MCF 10A (cell line): ENCODE measurements at regions of chr2 and their contacts with region 1.

Region 1: GRCh38 chr2:176454893-176455811 is 185.9 kb downstream of the MTX2 start:
- DNase-seq: peak; percentile 68
- H3K4me3 Mint-ChIP-seq: no peak overlapping the region
- H3K27ac Mint-ChIP-seq: no peak overlapping the region
- H3K4me1 Mint-ChIP-seq: peaks cover 6% of the 10 kb centered on the region
- H3K27me3 Mint-ChIP-seq: no peaks in the 10 kb centered on the region
- CTCF ChIP-seq: peak; percentile 81

Region 2: GRCh38 chr2:176126929-176127773 is 328.0 kb before region 1 on chr2:
- CTCF ChIA-PET with region 1: interaction called, 15 read pairs
- POLR2A ChIA-PET with region 1: no interaction called
- intact Hi-C with region 1: no loop called
- DNase-seq: peak; percentile 63
- H3K4me3 Mint-ChIP-seq: no peak overlapping the region
- H3K27ac Mint-ChIP-seq: no peak overlapping the region
- H3K4me1 Mint-ChIP-seq: no peaks in the 10 kb centered on the region
- H3K27me3 Mint-ChIP-seq: peaks cover 11% of the 10 kb centered on the region
- CTCF ChIP-seq: peak; percentile 76

Region 3: DNA sequence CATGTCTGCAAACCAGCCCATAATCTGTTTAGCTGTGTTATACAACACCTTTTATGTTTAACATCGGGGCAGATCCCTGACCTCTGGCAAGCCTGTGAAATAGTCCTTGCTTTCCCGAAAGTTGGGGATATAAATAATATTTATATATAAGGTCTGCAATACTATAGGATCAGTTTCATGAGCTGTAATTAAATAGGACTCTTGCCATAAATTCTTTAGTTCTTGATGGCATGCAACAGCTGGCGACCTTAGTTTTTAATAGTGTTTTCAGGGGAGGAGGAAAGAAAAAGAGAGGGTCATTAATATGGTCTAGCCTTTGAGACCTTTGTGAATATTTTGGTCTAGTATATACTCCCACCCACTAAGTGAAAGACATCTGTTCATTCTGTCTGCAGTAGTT is 19.4 kb before region 1 on chr2:
- CTCF ChIA-PET with region 1: interaction called, 18 read pairs
- POLR2A ChIA-PET with region 1: no interaction called
- intact Hi-C with region 1: no loop called
- DNase-seq: no peak
- H3K4me3 Mint-ChIP-seq: no peak overlapping the region
- H3K27ac Mint-ChIP-seq: no peak overlapping the region
- H3K4me1 Mint-ChIP-seq: no peaks in the 10 kb centered on the region
- H3K27me3 Mint-ChIP-seq: no peaks in the 10 kb centered on the region
- CTCF ChIP-seq: no peak

Region 4: DNA sequence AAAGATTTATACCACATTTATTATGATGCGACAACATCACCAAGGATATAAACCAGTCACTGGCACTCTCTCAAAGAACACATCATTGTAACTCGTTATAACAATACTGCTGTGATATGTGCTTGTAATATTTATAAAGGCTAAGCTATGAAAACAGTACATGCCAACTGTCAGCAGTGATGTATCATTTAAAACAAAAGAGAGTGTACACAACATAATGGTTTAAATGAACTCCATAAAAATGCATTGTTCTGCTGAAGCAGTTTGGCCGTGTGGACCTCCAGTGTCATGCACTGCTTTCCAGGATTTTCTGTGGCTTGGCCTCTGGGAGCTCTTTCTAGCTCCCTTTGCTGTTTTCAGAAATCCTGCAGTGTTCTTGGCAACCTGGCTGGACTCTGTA is 29.7 kb after region 1 on chr2:
- CTCF ChIA-PET with region 1: interaction called, 12 read pairs
- POLR2A ChIA-PET with region 1: no interaction called
- intact Hi-C with region 1: no loop called
- DNase-seq: no peak
- H3K4me3 Mint-ChIP-seq: no peak overlapping the region
- H3K27ac Mint-ChIP-seq: no peak overlapping the region
- H3K4me1 Mint-ChIP-seq: no peaks in the 10 kb centered on the region
- H3K27me3 Mint-ChIP-seq: no peaks in the 10 kb centered on the region
- CTCF ChIP-seq: no peak

Region 5: DNA sequence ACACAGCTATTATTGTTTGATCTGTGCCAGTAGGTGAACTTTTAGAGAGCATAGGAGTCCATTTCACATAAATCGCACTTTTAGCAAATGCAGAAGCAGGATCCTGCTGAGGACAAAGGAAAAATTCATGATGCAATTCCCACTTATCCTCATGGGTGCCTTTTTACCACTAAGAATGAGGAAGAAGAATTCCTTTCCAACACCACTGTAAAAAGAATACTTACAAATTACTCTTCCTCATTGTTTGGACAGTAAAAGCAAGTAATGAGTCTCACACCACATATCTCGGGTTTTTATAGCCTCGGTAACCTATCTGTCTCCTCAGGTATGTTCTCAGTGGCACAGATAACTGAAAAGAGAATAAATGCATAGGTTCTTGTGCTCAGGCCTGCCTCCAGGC is 52.6 kb after region 1 on chr2:
- CTCF ChIA-PET with region 1: no interaction called
- POLR2A ChIA-PET with region 1: no interaction called
- intact Hi-C with region 1: no loop called
- DNase-seq: no peak
- H3K4me3 Mint-ChIP-seq: no peak overlapping the region
- H3K27ac Mint-ChIP-seq: no peak overlapping the region
- H3K4me1 Mint-ChIP-seq: peaks cover 4% of the 10 kb centered on the region
- H3K27me3 Mint-ChIP-seq: no peaks in the 10 kb centered on the region
- CTCF ChIP-seq: no peak

Region 6: GRCh38 chr2:176569574-176569973 is 114.4 kb after region 1 on chr2:
- CTCF ChIA-PET with region 1: no interaction called
- POLR2A ChIA-PET with region 1: no interaction called
- intact Hi-C with region 1: no loop called
- DNase-seq: no peak
- H3K4me3 Mint-ChIP-seq: no peak overlapping the region
- H3K27ac Mint-ChIP-seq: no peak overlapping the region
- H3K4me1 Mint-ChIP-seq: no peaks in the 10 kb centered on the region
- H3K27me3 Mint-ChIP-seq: no peaks in the 10 kb centered on the region
- CTCF ChIP-seq: no peak

Region 7: DNA sequence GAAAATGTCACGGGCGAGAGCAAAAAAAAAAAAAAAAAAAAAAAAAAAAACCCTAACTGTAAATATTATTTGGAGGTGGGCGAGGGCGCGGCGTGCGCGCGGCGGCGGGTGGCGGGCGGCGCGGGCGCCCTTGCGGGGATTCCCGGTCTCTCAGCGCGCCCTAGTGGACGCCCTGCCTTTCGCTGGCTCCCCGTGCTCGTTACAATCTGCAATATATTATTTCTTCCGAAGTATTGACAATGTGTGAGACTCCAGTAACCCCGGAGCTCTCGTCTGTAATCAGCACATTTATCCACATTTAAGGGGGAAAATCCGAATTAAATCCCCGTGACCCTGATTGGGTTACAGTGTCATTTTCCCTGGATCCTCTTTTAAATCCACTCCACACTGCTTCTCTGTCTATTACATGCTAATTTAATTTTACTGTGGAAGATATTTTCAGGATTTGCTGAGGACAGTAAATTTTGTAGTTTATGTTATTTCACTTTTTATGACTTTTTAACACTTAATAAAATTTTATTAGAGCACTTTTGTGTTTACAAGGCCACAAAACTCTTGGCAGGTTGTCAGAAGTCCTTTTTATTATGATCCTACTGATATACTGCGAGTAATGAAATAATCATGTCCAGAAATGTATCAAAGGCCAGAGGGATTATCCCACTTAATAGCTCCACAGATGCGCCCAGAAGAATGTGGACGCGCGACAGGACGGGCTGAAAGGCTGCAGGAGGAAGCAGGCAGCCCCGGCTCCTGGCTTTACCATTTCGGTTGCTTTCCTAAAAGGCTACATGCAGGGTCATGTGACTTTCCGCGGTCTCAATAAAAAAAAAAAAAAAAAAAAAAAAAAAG is 183.2 kb after region 1 on chr2:
- CTCF ChIA-PET with region 1: interaction called, 41 read pairs
- POLR2A ChIA-PET with region 1: interaction called, 4 read pairs
- intact Hi-C with region 1: loop called (anchors 1 kb)
- DNase-seq: peak; percentile 61
- H3K4me3 Mint-ChIP-seq: peak overlapping the region; percentile 74
- H3K27ac Mint-ChIP-seq: no peak overlapping the region
- H3K4me1 Mint-ChIP-seq: peaks cover 6% of the 10 kb centered on the region
- H3K27me3 Mint-ChIP-seq: no peaks in the 10 kb centered on the region
- CTCF ChIP-seq: peak; percentile 85

Region 8: DNA sequence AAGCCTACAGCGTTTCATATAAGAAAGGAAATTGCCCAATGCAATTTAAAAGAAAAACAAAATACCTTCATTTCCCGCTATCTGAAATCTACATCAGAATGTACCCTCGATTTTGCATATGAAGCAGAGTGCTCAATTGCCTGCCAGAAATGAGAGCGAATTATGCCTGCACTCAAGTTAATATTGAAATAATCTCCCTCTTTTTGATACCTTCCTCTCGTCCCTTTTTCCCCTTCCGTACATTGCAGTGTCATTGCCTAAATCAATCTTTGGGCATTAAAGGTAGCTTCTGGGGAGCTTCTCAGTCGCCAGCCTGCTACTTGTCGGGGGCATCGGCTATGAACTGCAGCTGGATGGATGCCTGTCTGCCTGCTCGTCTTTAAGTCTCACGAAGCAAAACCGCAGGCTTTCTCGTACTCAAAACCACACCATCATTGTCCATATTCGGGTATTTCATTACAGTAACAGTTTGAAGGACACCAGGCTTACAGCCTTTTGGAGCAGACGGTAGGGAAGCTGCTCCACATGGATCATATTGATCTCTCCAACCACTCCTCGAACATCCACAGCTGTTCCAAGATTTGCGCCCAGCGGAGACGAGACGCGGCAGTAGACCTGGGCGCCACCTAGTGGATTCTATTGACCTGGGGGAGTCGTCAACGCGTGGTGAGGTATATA is 693.5 kb after region 1 on chr2:
- CTCF ChIA-PET with region 1: no interaction called
- POLR2A ChIA-PET with region 1: no interaction called
- intact Hi-C with region 1: loop called (anchors 10 kb)
- DNase-seq: peak; percentile 84
- H3K4me3 Mint-ChIP-seq: peak overlapping the region; percentile 70
- H3K27ac Mint-ChIP-seq: no peak overlapping the region
- H3K4me1 Mint-ChIP-seq: peaks cover 15% of the 10 kb centered on the region
- H3K27me3 Mint-ChIP-seq: peaks cover 66% of the 10 kb centered on the region
- CTCF ChIP-seq: peak; percentile 70